Panc1 (cell line): ENCODE measurements at regions of chr11 and their contacts with region 1.

Region 1: GRCh38 chr11:36564376-36565030 is 3.3 kb upstream of the RAG1 start:
- DNase-seq: peak; percentile 18
- ATAC-seq: peak; percentile 90
- H3K4me3 ChIP-seq: peak overlapping the region; percentile 22 to 30
- H3K27ac ChIP-seq: peak overlapping the region; percentile 41; the same call in 1 of the 2 replicates
- H3K4me1 ChIP-seq: peaks cover 8% of the 10 kb centered on the region
- H3K27me3 ChIP-seq: peaks cover 9% of the 10 kb centered on the region; the same call in 1 of the 2 replicates
- CTCF ChIP-seq: peak; percentile 80

Region 2: GRCh38 chr11:36622431-36623136 is 58.1 kb after region 1 on chr11:
- CTCF ChIA-PET with region 1: no interaction called
- POLR2A ChIA-PET with region 1: no interaction called
- in situ Hi-C with region 1: no loop called
- intact Hi-C with region 1: loop called (anchors 1 kb)
- DNase-seq: peak; percentile 7
- ATAC-seq: peak; percentile 95
- H3K4me3 ChIP-seq: no peak overlapping the region
- H3K27ac ChIP-seq: peak overlapping the region; percentile 36; the same call in 1 of the 2 replicates
- H3K4me1 ChIP-seq: peaks cover 3% of the 10 kb centered on the region; the same call in 1 of the 2 replicates
- H3K27me3 ChIP-seq: no peaks in the 10 kb centered on the region
- CTCF ChIP-seq: peak; percentile 70; the same call in 1 of the 2 replicates

Region 3: GRCh38 chr11:36684840-36685801 is 120.6 kb after region 1 on chr11:
- CTCF ChIA-PET with region 1: no interaction called
- POLR2A ChIA-PET with region 1: interaction called, 3 read pairs
- in situ Hi-C with region 1: no loop called
- intact Hi-C with region 1: loop called (anchors 5 kb)
- DNase-seq: no peak
- ATAC-seq: no peak
- H3K4me3 ChIP-seq: no peak overlapping the region
- H3K27ac ChIP-seq: no peak overlapping the region
- H3K4me1 ChIP-seq: no peaks in the 10 kb centered on the region
- H3K27me3 ChIP-seq: 0 out of 2 replicates have a peak, but pooled peaks cover 6% of the 10 kb centered on the region
- CTCF ChIP-seq: no peak